Ascending aorta (tissue), 2 donors: ENCODE measurements at regions of chr7 and their contacts with region 1.

Region 1: GRCh38 chr7:75072978-75073282 is 672 bp downstream of the RCC1L start:
- DNase-seq: no peak
- H3K4me3 ChIP-seq: peak overlapping the region; percentile 70 to 99
- H3K27ac ChIP-seq: peak overlapping the region; percentile 86 to 92
- H3K4me1 ChIP-seq: peaks cover 2 to 6% of the 10 kb centered on the region in 2 donors
- H3K27me3 ChIP-seq: no peaks in the 10 kb centered on the region
- CTCF ChIP-seq: no peak

Region 2: DNA sequence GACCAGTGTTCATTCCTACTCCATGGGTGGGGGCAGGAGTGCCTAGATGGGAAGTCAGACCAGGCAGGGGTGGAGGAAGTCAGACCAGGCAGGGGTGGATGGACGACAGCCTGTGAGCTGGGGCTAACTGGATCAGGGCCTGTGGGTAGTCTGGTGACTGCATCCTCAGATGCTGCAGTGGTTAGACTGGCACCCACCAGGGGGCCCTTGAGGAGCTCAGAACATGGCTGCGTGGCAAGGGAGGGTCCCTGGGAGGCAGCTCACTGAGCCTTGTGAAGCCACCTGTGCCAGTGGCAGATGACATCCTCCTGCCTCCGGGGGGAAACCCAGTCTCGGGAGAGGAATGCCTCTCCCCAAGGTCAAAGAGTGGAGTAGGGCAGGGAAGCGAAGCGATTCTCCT is 34.4 kb before region 1 on chr7:
- intact Hi-C with region 1: no loop called
- DNase-seq: no peak
- H3K4me3 ChIP-seq: no peak overlapping the region
- H3K27ac ChIP-seq: no peak overlapping the region
- H3K4me1 ChIP-seq: no peaks in the 10 kb centered on the region
- H3K27me3 ChIP-seq: no peaks in the 10 kb centered on the region
- CTCF ChIP-seq: no peak

Region 3: DNA sequence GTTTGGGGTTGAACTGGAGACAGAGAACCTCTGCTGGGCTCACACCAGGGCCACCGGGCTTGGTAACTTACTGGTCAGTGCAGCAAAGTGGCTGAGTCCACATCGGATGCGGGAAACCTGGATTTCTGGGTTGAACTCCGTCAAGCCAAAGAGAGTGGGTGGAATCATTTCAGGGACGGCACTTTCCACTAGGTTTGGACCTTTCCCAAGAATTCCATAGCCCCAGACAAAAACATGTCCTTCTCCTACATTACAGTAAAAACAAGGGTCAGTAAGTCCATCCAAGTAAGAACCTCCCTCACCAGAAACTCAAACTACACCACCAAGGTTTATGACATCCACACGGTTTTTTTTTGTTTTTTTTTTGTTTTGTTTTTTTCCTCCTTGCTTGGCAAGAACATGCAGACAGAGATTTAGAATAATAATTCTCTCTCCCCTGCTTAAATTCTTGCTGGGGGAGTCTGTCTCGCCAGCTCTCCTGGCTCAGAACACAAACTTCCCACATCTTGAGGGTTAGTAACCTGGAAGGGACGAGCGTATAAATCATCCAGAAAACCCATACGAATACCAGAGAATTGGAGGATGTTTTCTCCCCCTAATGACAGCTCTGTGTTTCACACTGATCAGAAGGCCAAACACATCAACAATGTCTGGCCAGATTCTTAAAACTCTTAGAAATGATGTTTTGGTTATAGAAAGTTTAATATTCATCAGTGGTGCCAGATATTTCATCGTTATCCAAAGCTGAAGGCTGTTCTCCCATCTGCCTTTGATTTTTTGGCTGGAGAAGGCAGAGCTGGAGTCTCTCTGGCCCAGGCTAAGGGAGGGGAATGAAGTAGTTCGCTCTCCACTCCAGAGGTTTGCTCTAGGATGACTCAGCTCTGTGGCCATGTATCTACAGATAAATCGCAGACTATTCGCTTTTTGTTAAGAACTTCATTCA is 16.8 kb before region 1 on chr7:
- intact Hi-C with region 1: loop called (anchors 2 kb)
- DNase-seq: peak in 1 of 2 donors; percentile 77
- H3K4me3 ChIP-seq: peak overlapping the region in 1 of 2 donors; percentile 33
- H3K27ac ChIP-seq: peak overlapping the region; percentile 81 to 85
- H3K4me1 ChIP-seq: peaks cover 10 to 36% of the 10 kb centered on the region in 2 donors
- H3K27me3 ChIP-seq: no peaks in the 10 kb centered on the region
- CTCF ChIP-seq: no peak